IMR-90 (cell line): ENCODE measurements at regions of chr3 and their contacts with region 1.

Region 1: DNA sequence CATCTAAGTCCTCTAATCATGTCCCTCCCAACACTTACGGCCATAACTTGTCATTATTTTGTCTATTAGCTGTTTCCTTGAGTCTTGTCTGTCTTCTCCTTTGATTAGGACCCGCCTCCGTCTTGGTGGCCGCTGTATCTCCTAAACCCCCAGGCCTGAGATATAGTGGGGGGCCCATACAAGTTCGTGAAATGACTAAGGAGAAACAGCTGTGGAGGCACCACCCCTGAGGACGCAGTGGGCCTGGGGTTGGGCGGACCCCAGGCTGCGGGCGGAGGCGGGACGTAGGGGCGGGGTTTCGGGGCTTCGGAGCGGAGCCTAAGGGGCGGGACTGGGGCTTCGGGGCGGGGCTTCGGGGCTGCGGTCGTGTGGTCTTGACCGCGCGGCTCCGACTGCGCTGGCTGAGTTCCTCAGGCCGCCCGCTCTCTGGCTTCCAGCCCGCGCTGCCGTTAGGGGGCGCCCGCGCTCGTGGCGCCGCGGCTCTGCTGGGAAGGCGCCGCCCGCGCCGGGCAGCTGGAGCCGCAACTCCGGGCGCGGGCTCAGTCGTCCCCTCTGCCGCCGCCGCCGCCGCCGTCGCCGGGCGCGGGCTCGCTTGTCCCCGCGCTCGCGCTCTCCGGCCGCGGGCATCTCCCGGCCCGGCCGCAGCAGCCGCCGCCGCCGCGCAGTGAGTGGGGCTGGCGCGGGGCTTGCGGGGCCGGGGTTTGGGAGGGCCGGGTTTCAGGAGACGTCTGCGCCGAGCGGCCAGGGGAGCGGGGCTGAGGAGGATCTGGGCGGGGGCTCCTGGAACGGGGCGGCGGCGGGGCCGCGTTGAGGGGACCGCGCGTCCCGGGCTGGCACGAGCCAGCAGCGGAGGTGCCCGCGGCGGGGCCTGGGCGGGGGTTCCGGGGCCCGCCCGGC is at the start of gene KCTD6:
- DNase-seq: peak; percentile 92
- ATAC-seq: peak; percentile 94
- H3K4me3 ChIP-seq: peak within 1 kb of the TSS; percentile 89
- H3K27ac ChIP-seq: peak within 1 kb of the TSS; percentile 60
- H3K4me1 ChIP-seq: peaks cover 13% of the 10 kb centered on the region
- H3K27me3 ChIP-seq: no peaks in the 10 kb centered on the region
- CTCF ChIP-seq: peak; percentile 92
- POLR2A ChIP-seq: no peak
- RAD21 ChIP-seq: peak; percentile 57
- total RNA-seq, gene KCTD6: 7.0 and 9.4 TPM in 2 replicates

Region 2: DNA sequence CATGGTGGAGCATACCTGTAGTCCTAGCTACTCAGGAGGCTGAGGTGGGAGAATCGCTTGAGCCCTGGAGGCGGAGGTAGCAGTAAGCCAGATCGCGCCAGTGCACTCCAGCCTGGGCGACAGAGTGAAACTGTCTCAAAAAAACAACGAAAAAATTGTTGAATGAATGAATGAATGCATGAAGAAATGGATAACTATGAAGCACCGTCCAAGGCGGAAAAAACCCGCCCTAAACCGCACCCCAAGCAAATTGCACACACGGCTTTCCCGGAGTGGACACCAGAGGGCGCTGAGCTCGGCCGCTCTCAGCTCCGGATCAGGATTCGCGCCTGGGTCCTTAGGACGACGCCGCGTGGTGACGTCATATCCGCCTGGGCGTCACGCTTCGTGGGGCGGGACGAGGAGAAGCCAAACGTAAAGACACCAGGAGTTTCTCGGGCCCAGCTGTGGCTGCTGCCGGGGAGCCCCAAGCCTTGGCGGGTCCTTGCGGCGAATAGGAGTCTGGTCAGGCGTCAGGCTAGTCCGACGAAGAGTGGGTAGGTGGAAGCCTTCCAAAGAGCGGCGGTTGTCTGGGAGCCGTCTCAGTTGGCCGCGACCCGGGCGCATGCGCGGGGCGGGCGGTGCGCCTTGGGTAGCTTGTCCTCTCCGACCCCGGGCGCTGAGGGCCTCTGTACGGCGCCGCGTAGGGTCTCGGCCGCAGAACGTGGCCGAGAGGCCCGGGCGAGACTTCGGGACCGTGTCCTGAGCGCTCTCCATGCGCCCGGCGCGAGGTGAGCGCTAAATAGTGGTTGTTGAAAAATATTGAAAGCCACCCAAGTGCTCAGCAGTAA is 185.7 kb before region 1 on chr3 and contains the starts of genes HTD2 and RPP14:
- CTCF ChIA-PET with region 1: no interaction called
- POLR2A ChIA-PET with region 1: interaction called, 3 read pairs
- dilution Hi-C with region 1: no loop called
- in situ Hi-C with region 1: no loop called
- intact Hi-C with region 1: loop called (anchors 1 kb)
- DNase-seq: peak; percentile 97
- ATAC-seq: peak; percentile 92
- H3K4me3 ChIP-seq: peak within 1 kb of the TSS; percentile 74
- H3K27ac ChIP-seq: peak within 1 kb of the TSS; percentile 94
- H3K4me1 ChIP-seq: peaks cover 6% of the 10 kb centered on the region
- H3K27me3 ChIP-seq: peaks cover 9% of the 10 kb centered on the region
- CTCF ChIP-seq: peak; percentile 98
- POLR2A ChIP-seq: peak; percentile 92
- RAD21 ChIP-seq: peak; percentile 42
- total RNA-seq, gene HTD2: 11.4 and 13.3 TPM in 2 replicates
- total RNA-seq, gene RPP14: 6.6 and 11.9 TPM in 2 replicates

Region 3: GRCh38 chr3:58324391-58325390 is 167.1 kb before region 1 on chr3:
- CTCF ChIA-PET with region 1: interaction called, 5 read pairs
- POLR2A ChIA-PET with region 1: no interaction called
- dilution Hi-C with region 1: no loop called
- in situ Hi-C with region 1: loop called (anchors 10 kb)
- intact Hi-C with region 1: no loop called
- DNase-seq: peak; percentile 10
- ATAC-seq: peak; percentile 13
- H3K4me3 ChIP-seq: no peak overlapping the region
- H3K27ac ChIP-seq: peak overlapping the region; percentile 34; the same call in 1 of the 2 replicates
- H3K4me1 ChIP-seq: peaks cover 13% of the 10 kb centered on the region
- H3K27me3 ChIP-seq: no peaks in the 10 kb centered on the region
- CTCF ChIP-seq: no peak
- POLR2A ChIP-seq: no peak
- RAD21 ChIP-seq: no peak

Region 4: GRCh38 chr3:58332575-58333188 is 159.1 kb before region 1 on chr3 and contains the start of gene PXK:
- CTCF ChIA-PET with region 1: no interaction called
- POLR2A ChIA-PET with region 1: no interaction called
- dilution Hi-C with region 1: no loop called
- in situ Hi-C with region 1: loop called (anchors 10 kb)
- intact Hi-C with region 1: loop called (anchors 2 kb)
- DNase-seq: peak; percentile 70
- ATAC-seq: peak; percentile 87
- H3K4me3 ChIP-seq: peak within 1 kb of the TSS; percentile 91
- H3K27ac ChIP-seq: peak within 1 kb of the TSS; percentile 93
- H3K4me1 ChIP-seq: peaks cover 16% of the 10 kb centered on the region
- H3K27me3 ChIP-seq: no peaks in the 10 kb centered on the region
- CTCF ChIP-seq: peak; percentile 37
- POLR2A ChIP-seq: peak; percentile 32; the same call in 1 of the 2 replicates
- RAD21 ChIP-seq: peak; percentile 46
- total RNA-seq, gene PXK: 14.3 and 15.6 TPM in 2 replicates

Region 5: DNA sequence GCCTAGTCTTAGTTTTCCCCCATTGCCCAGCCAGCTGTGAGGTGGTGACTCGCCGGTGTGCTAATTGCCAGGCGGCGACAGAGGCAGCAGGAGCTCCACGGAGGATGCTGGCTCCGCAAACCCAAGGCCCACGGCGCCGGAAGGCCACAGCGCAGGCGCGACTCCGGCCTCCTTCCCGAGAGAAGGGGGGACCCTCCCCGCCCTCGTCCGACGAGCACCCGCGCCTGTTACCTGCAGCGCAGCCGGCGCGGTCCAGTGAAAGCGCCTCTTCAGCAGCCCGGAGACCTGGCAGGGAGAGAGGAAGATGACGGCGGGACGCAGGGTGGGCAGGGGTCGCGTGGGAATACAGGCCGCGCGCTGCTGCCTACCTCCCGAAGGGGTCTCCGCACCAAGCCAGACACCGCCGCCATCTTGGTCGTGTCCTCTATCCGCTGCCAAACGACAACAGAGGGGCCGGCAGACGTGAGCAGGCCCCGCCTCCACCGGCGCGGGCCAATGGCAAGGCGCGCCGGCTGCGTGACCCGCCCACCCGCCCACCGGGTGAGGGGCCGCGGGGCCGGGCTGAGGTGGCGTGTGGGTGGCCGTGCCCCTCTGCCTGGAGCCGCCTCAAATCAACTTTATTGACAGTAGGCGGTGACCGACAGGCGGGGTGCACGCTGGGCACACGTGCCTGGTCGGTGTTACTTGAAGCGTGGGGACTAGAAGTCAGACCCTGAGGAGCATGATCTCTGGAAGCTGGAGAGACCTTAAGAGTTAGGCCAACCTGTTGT is 58.2 kb before region 1 on chr3 and contains the start of gene PDHB:
- CTCF ChIA-PET with region 1: no interaction called
- POLR2A ChIA-PET with region 1: interaction called, 3 read pairs
- dilution Hi-C with region 1: no loop called
- in situ Hi-C with region 1: no loop called
- intact Hi-C with region 1: loop called (anchors 2 kb)
- DNase-seq: peak; percentile 86
- ATAC-seq: peak; percentile 91
- H3K4me3 ChIP-seq: peak within 1 kb of the TSS; percentile 92
- H3K27ac ChIP-seq: peak within 1 kb of the TSS; percentile 98
- H3K4me1 ChIP-seq: peaks cover 12% of the 10 kb centered on the region
- H3K27me3 ChIP-seq: no peaks in the 10 kb centered on the region
- CTCF ChIP-seq: no peak
- POLR2A ChIP-seq: peak; percentile 62; the same call in 1 of the 2 replicates
- RAD21 ChIP-seq: 0 out of 2 replicates have a peak, but pooled peaks have one; percentile 7
- total RNA-seq, gene PDHB: 73.5 and 86.9 TPM in 2 replicates

Region 6: GRCh38 chr3:58532794-58533220 is 41.1 kb after region 1 on chr3:
- CTCF ChIA-PET with region 1: interaction called, 9 read pairs
- POLR2A ChIA-PET with region 1: no interaction called
- dilution Hi-C with region 1: no loop called
- in situ Hi-C with region 1: no loop called
- intact Hi-C with region 1: loop called (anchors 5 kb)
- DNase-seq: peak; percentile 65
- ATAC-seq: peak; percentile 81
- H3K4me3 ChIP-seq: no peak overlapping the region
- H3K27ac ChIP-seq: no peak overlapping the region
- H3K4me1 ChIP-seq: peaks cover 18% of the 10 kb centered on the region
- H3K27me3 ChIP-seq: no peaks in the 10 kb centered on the region
- CTCF ChIP-seq: peak; percentile 95
- POLR2A ChIP-seq: no peak
- RAD21 ChIP-seq: peak; percentile 92